ENCODE measurements at regions of chr9 and their contacts with region 1.

Region 1: DNA sequence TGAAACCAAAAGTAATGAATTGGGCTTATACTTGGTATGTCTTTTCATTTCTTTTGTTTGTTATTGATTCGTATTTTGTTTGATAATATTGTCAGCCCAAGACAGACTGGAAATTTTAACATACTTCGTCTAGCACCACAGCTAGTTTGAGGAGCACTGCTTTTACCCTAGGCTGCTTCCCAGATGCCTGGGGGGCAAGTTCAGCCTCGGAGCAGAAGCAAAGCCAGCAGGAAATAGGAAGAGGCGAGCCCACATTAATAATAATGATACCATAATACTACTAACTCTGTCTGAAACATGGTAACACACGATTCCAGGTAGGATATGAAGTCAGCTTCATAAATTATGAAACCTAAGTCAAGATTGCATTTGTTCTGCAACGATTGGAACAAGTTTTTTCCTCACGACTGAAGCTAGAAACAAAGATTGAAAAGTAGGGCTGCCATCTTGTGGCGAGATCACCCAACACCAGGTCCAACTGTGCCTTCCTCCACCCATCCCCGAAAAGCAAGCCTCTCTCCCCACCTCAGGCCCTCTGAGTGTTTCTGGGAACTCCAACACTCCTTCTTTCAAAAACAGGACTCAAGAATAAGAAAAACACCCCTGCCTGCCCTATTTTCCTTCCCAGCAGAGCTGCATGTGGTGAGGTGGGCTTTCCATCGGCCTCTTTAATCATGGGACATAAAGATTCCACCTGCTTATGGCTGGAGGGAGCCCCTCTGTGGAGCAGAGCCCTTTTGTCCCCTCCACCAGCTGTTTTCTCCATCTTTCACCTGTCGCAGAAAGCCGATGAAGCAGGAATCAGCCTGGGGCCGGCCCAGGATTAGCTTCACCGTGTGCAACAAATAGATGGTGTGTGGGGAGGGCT is 236.4 kb downstream of the CAAP1 start:
- DNase-seq: no peak
- ATAC-seq: peak; percentile 81
- H3K4me3 ChIP-seq: no peak overlapping the region
- H3K27ac ChIP-seq: no peak overlapping the region
- H3K4me1 ChIP-seq: no peaks in the 10 kb centered on the region
- H3K27me3 ChIP-seq: no peaks in the 10 kb centered on the region; a peak in 1 of 4 replicates
- CTCF ChIP-seq: peak; percentile 28 to 43 (median 39); a peak in 4 of 6 replicates
- EP300 ChIP-seq: no peak
- POLR2A ChIP-seq: no peak
- RAD21 ChIP-seq: 0 out of 2 replicates have a peak, but pooled peaks have one; percentile 4

Region 2: GRCh38 chr9:26597542-26598149 is 58.6 kb before region 1 on chr9:
- CTCF ChIA-PET with region 1: no interaction called
- POLR2A ChIA-PET with region 1: no interaction called
- RAD21 ChIA-PET with region 1: no interaction called
- SMC1A ChIA-PET with region 1: no interaction called
- in situ Hi-C with region 1: loop called (anchors 10 kb)
- intact Hi-C with region 1: no loop called
- DNase-seq: no peak
- ATAC-seq: no peak
- H3K4me3 ChIP-seq: no peak overlapping the region
- H3K27ac ChIP-seq: no peak overlapping the region
- H3K4me1 ChIP-seq: no peaks in the 10 kb centered on the region
- H3K27me3 ChIP-seq: no peaks in the 10 kb centered on the region
- CTCF ChIP-seq: no peak
- EP300 ChIP-seq: no peak
- POLR2A ChIP-seq: no peak
- RAD21 ChIP-seq: no peak

Region 3: GRCh38 chr9:26685818-26686217 is 29.6 kb after region 1 on chr9:
- CTCF ChIA-PET with region 1: no interaction called
- POLR2A ChIA-PET with region 1: no interaction called
- RAD21 ChIA-PET with region 1: no interaction called
- SMC1A ChIA-PET with region 1: no interaction called
- in situ Hi-C with region 1: no loop called
- intact Hi-C with region 1: no loop called
- DNase-seq: no peak
- ATAC-seq: no peak
- H3K4me3 ChIP-seq: no peak overlapping the region
- H3K27ac ChIP-seq: no peak overlapping the region
- H3K4me1 ChIP-seq: no peaks in the 10 kb centered on the region
- H3K27me3 ChIP-seq: no peaks in the 10 kb centered on the region
- CTCF ChIP-seq: no peak
- EP300 ChIP-seq: no peak
- POLR2A ChIP-seq: no peak
- RAD21 ChIP-seq: no peak

Region 4: DNA sequence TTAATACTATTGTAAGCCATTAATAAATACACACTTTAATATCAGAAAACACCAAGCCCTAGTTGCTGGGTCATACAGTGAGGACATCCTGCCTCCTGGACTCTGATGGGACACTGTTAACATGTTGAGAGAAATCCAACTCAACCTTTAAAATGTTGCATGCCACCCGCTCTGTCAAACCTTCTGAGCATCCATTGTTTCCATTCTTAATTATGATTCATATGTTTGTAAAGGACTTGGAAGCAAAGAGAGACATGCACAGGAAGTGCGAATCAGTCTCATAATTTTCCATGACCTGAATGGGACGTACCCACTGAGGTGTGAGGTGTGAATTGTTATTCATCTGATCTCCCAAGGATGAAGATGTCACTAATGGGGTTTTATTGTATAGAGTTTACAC is 50.0 kb after region 1 on chr9:
- CTCF ChIA-PET with region 1: no interaction called
- POLR2A ChIA-PET with region 1: no interaction called
- RAD21 ChIA-PET with region 1: no interaction called
- SMC1A ChIA-PET with region 1: no interaction called
- in situ Hi-C with region 1: no loop called
- intact Hi-C with region 1: loop called (anchors 5 kb)
- DNase-seq: no peak
- ATAC-seq: no peak
- H3K4me3 ChIP-seq: no peak overlapping the region
- H3K27ac ChIP-seq: no peak overlapping the region
- H3K4me1 ChIP-seq: no peaks in the 10 kb centered on the region
- H3K27me3 ChIP-seq: no peaks in the 10 kb centered on the region
- CTCF ChIP-seq: no peak
- EP300 ChIP-seq: no peak
- POLR2A ChIP-seq: no peak
- RAD21 ChIP-seq: no peak